ENCODE measurements at regions of chr21 and their contacts with region 1.

Region 1: DNA sequence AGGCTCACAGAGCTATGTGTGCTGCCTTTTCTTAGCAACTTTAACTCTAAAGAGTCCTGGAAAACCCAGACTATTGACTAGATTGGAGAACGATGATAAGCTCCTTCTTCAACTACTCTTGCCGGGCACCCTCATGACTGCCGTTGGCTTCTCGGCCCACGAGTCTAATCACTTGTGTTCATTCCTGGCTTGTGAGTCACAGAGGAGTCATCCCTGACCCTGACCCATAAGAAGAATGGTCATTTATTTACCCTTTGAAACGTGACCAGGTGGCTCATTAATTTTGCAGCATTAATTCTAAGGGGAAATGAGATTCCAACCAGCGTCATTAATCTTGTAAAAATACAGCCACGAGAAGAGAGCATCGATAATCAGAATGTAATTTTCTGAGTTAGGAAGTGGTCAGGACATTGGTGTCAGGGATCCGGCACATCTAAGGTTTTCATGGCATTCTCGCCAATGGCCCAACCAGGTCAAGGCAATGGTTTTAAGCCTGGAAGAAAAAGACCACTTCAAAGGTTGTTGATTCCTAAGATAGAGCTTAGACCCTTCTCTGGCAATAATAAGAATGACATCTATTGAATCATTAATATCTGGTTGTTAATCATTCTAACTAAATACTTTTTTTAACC is 183.6 kb upstream of the RUNX1 start:
- DNase-seq: peak; percentile 63 to 88
- H3K4me3 ChIP-seq: 0 out of 2 replicates have a peak overlapping the region, but pooled peaks have one; percentile 6
- H3K27ac ChIP-seq: peak overlapping the region; percentile 86
- H3K4me1 ChIP-seq: peaks cover 50% of the 10 kb centered on the region
- H3K27me3 ChIP-seq: no peaks in the 10 kb centered on the region
- CTCF ChIP-seq: no peak

Region 2: GRCh38 chr21:35198031-35198431 is 34.6 kb before region 1 on chr21:
- CTCF ChIA-PET with region 1: no interaction called
- POLR2A ChIA-PET with region 1: no interaction called
- intact Hi-C with region 1: loop called (anchors 5 kb)
- DNase-seq: peak; percentile 48 to 97
- H3K4me3 ChIP-seq: peak overlapping the region; percentile 22; the same call in 1 of the 2 replicates
- H3K27ac ChIP-seq: peak overlapping the region; percentile 100
- H3K4me1 ChIP-seq: peaks cover 48% of the 10 kb centered on the region
- H3K27me3 ChIP-seq: no peaks in the 10 kb centered on the region
- CTCF ChIP-seq: no peak

Region 3: GRCh38 chr21:35400233-35400957 is 167.7 kb after region 1 on chr21:
- CTCF ChIA-PET with region 1: no interaction called
- POLR2A ChIA-PET with region 1: no interaction called
- intact Hi-C with region 1: loop called (anchors 1 kb)
- DNase-seq: peak; percentile 19 to 77
- H3K4me3 ChIP-seq: no peak overlapping the region
- H3K27ac ChIP-seq: peak overlapping the region; percentile 52
- H3K4me1 ChIP-seq: peaks cover 32% of the 10 kb centered on the region
- H3K27me3 ChIP-seq: no peaks in the 10 kb centered on the region
- CTCF ChIP-seq: peak; percentile 68

Region 4: GRCh38 chr21:36330904-36331303 is 1098.2 kb after region 1 on chr21:
- CTCF ChIA-PET with region 1: no interaction called
- POLR2A ChIA-PET with region 1: no interaction called
- intact Hi-C with region 1: no loop called
- DNase-seq: peak; percentile 32 to 40
- H3K4me3 ChIP-seq: no peak overlapping the region
- H3K27ac ChIP-seq: no peak overlapping the region
- H3K4me1 ChIP-seq: no peaks in the 10 kb centered on the region
- H3K27me3 ChIP-seq: no peaks in the 10 kb centered on the region
- CTCF ChIP-seq: peak; percentile 72

Measured in PC-9 (cell line).